Left cardiac atrium (tissue), 4 donors: ENCODE measurements at regions of chr2 and their contacts with region 1.

Region 1: GRCh38 chr2:201451292-201452057 is at the starts of genes STRADB and TRAK2:
- DNase-seq: peak; percentile 96
- ATAC-seq: peak; percentile 98 to 99
- total RNA-seq, gene STRADB: 32.5 to 51.5 TPM
- total RNA-seq, gene TRAK2: 104 to 125 TPM

Region 2: DNA sequence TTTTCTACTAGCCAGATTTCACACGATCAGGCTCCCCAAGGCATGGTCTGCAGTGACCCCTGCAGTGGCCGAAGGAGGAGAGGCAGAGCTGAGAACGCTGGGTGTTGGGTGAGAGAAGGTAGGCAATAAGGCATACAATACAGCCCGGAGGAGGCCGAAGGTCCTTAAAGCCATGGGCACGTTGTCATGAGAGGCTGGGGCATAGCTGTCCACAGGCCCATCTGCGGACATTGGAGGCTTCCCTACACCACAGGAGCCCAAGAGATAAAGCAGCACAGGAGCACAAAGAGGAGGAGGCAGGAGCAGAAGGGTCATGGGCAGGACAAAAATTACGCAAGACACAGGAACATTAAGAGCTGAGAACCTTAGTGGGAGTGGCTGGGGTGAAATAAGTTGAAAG is 656.4 kb before region 1 on chr2:
- intact Hi-C with region 1: no loop called
- DNase-seq: no peak
- ATAC-seq: peak; percentile 70 to 89

Region 3: GRCh38 chr2:201406077-201406662 is 45.3 kb before region 1 on chr2:
- intact Hi-C with region 1: loop called (anchors 5 to 10 kb)
- DNase-seq: no peak
- ATAC-seq: peak; percentile 51 to 67

Region 4: GRCh38 chr2:201414099-201415023 is 37.1 kb before region 1 on chr2:
- intact Hi-C with region 1: loop called (anchors 2 to 10 kb)
- DNase-seq: no peak
- ATAC-seq: peak; percentile 65 to 89

Region 5: DNA sequence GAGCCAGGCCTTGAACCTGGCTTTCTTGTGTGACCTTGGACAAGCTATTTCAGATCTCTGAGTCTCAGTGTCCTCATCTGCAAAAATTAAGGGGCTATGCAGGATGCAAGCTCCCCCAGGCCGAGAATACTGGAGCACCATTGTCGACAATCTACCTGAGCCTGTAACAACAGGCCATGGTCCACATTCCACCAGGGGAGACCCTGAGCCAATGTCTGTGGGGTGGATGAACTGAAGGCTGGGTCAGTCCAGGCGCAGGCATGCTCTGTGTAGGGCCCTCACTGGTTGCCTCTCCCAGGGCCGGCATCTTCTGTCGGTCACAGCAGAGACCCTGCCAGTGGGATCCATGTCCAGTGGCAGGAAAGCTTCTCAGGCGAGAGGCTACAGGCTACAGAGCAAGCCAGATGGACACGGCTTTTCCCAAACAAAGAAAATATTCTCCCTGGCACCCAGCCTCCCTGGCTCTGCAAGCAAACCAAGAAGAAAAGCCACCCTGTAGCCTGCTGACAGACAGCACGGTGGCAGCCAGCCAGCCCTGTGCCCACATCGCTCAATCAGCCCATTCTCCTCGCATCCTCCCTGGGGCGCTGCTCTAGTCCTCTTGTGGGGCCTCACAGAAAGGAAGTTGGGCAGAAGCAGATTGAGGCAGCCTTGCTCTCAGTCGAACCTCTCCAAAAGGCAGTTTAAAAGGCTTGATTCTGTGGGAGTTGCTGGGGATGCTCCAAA is 533.5 kb after region 1 on chr2:
- intact Hi-C with region 1: no loop called
- DNase-seq: no peak
- ATAC-seq: peak in 1 of 2 donors; percentile 47